Activated CD8-positive, alpha-beta memory T cell treated with anti-CD3 and anti-CD28 coated beads, Interleukin-2, amount 10 ng/mL, durations not matched to agents 7 days and 5 days (primary cell): ENCODE measurements at regions of chr12 and their contacts with region 1.

Region 1: DNA sequence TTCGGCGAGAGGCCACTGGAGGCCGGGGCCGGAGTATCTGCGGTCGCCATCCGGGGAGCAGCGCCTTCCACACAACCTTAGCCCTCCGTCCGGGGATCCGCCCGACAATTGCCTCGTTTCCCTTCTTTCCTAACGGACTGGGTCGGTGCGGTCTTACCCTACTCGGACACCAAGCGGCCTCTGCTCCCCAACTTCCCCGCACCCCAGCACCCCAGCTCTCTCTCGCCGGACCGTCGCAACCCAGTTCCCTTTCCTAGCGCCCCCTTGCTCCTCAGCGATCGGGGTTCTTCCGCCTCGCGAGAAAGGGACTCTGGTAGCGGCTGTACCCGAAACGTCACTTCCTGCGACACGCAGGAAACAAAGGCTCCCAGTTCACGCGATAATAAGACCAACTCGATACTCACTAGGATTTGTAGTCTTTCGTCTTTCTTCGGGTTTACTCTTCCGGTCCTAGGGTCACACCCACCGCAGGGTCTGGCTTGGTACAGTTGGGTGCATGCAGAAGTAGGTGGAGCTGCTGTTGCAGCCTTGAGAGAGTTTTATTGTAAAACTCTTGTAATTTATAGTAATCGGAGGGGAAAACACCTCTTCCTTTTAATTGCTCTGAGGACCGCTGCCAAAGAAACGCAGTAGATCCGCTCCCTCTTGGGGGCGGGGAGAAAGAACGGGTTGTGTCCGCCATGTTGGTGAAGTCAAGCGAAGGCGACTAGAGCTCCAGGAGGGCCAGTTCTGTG is at the start of gene ZFC3H1:
- DNase-seq: peak; percentile 97
- ATAC-seq: peak; percentile 87
- H3K4me3 Mint-ChIP-seq: peak within 1 kb of the TSS; percentile 95
- H3K27ac Mint-ChIP-seq: peak within 1 kb of the TSS; percentile 99
- H3K4me1 Mint-ChIP-seq: peaks cover 37% of the 10 kb centered on the region
- H3K27me3 Mint-ChIP-seq: no peaks in the 10 kb centered on the region
- total RNA-seq, gene ZFC3H1: 54.6 to 79.2 TPM

Region 2: DNA sequence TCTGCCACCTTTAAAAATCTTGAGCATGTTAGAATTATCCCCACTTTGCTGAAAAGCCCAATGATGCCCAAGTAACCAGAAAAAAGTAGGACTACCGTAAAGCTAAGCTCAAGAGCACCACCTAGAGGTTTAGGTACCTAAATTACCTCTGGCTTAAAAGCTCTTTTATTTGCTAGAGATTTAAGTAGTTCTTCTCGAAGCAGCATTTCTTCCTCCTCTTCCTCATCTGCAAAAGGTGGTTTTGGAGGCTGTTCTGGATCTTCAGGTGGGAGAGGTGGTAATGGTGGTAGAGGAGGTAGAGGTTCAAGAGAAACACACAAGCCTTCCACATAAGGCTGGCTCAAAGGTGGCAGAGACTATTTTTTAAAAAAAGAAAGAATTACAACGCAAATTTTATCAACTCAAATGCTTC is 27.0 kb before region 1 on chr12:
- CTCF ChIA-PET with region 1: interaction called, 16 read pairs
- DNase-seq: no peak
- ATAC-seq: peak; percentile 65
- H3K4me3 Mint-ChIP-seq: no peak overlapping the region
- H3K27ac Mint-ChIP-seq: peak overlapping the region; percentile 67
- H3K4me1 Mint-ChIP-seq: peaks cover 14% of the 10 kb centered on the region
- H3K27me3 Mint-ChIP-seq: no peaks in the 10 kb centered on the region

Region 3: GRCh38 chr12:71645268-71645667 is 18.5 kb before region 1 on chr12:
- CTCF ChIA-PET with region 1: interaction called, 13 read pairs
- DNase-seq: no peak
- ATAC-seq: no peak
- H3K4me3 Mint-ChIP-seq: no peak overlapping the region
- H3K27ac Mint-ChIP-seq: no peak overlapping the region
- H3K4me1 Mint-ChIP-seq: peaks cover 35% of the 10 kb centered on the region
- H3K27me3 Mint-ChIP-seq: no peaks in the 10 kb centered on the region

Region 4: DNA sequence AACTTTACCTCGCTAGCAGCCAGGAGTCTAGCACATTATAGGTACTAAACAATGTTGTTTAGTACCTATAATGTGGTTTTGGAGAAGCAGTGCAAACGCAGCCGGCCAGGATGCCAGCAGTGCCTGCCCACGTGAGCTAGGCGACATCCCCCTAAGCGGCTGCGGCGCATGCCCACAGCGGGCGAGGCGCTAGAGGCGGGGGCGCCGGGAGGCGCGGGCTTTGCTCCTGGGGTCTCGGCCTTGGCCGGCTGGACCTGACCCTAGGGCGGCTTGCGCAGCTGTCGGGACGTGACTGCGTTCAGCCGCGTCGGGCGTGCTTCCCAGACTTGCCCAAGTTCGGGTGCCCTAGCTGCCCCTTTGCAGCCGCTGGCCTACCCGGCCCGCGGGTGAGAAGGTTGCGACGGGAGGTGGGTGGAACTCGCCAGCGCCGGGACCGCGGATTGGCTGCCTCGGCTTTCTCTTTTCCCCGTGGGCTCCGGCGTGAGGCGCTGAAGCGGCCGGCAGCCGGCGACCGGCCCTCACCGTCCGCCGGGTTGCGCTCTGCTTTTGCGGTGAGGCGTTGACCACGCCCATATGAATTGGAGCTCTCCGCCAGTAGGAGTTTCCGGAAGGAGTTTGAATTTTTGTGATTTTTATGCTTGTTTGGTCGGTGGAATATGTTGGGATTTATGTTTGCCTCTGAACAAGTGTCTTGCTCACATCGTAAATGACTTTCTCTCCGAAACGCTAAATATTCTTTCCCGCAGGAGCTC is 22.4 kb after region 1 on chr12 and contains the start of gene TMEM19:
- CTCF ChIA-PET with region 1: interaction called, 45 read pairs
- DNase-seq: peak; percentile 88
- ATAC-seq: peak; percentile 96
- H3K4me3 Mint-ChIP-seq: peak within 1 kb of the TSS; percentile 93
- H3K27ac Mint-ChIP-seq: peak within 1 kb of the TSS; percentile 97
- H3K4me1 Mint-ChIP-seq: peaks cover 31% of the 10 kb centered on the region
- H3K27me3 Mint-ChIP-seq: no peaks in the 10 kb centered on the region
- total RNA-seq, gene TMEM19: 16.5 to 16.6 TPM

Region 5: DNA sequence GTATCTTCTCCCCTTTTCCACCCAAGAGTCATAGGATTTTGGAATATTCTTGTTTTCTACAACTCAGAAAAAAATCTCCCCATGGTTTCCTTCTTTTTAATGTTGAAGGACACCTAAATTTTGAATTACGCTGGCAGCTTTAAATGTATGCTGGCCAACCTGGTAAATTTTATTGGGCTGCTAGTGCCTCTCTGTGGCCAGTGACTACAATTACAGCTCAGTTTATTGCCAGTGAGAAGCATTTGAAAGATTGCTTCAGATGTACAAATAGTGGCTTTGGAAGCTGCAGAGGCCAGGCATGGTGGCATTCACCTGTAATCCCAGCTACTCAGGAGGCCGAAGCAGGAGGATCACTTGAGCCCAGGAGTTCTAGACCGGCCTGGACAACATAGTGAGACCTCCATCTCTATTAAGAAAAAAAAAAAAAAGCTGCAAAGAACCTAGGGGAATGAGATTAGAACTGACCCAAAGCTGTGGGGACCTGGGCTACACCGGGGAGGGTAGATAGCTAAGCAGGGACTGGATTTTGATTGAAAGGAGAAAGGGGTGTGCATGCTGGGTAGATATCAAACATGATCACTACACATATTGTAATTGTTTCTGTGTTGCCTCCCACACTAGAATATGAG is 83.4 kb after region 1 on chr12:
- CTCF ChIA-PET with region 1: interaction called, 13 read pairs
- DNase-seq: peak; percentile 50
- ATAC-seq: peak; percentile 85
- H3K4me3 Mint-ChIP-seq: no peak overlapping the region
- H3K27ac Mint-ChIP-seq: no peak overlapping the region
- H3K4me1 Mint-ChIP-seq: no peaks in the 10 kb centered on the region
- H3K27me3 Mint-ChIP-seq: peaks cover 45% of the 10 kb centered on the region

Region 6: GRCh38 chr12:71763677-71764379 is 100.1 kb after region 1 on chr12:
- CTCF ChIA-PET with region 1: no interaction called
- DNase-seq: no peak
- ATAC-seq: no peak
- H3K4me3 Mint-ChIP-seq: no peak overlapping the region
- H3K27ac Mint-ChIP-seq: no peak overlapping the region
- H3K4me1 Mint-ChIP-seq: peaks cover 40% of the 10 kb centered on the region
- H3K27me3 Mint-ChIP-seq: no peaks in the 10 kb centered on the region